Activated CD8-positive, alpha-beta T cell treated with anti-CD3 and anti-CD28 coated beads for 36 hours (primary cell): ENCODE measurements at regions of chr20 and their contacts with region 1.

Region 1: DNA sequence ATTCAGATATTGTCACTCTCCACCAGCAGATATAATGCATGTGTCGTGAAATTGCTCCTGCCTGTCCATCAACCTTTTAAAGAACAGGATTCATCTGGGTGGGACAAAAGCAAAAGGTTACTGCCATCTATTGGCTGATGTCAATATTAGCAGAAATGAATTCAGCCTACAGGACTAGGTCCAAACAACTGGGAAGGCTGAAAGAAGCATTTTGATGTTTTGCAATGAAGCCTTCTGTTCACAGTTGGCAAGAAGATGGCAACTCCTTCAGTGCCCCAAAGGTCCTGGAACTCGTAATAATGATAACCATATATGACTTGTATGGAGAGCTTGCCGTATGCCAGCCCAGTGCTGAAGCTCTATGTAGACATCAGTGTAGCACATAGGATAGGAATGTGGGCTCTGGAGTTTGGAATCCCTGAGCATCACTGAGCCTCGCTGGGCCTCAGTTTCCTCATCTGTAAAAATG is 7.5 kb downstream of the BCAS1 start:
- DNase-seq: no peak
- ATAC-seq: peak; percentile 34
- H3K4me3 Mint-ChIP-seq: no peak overlapping the region
- H3K27ac Mint-ChIP-seq: no peak overlapping the region
- H3K4me1 Mint-ChIP-seq: peaks cover 8% of the 10 kb centered on the region
- H3K27me3 Mint-ChIP-seq: no peaks in the 10 kb centered on the region
- CTCF ChIP-seq: peak; percentile 82

Region 2: DNA sequence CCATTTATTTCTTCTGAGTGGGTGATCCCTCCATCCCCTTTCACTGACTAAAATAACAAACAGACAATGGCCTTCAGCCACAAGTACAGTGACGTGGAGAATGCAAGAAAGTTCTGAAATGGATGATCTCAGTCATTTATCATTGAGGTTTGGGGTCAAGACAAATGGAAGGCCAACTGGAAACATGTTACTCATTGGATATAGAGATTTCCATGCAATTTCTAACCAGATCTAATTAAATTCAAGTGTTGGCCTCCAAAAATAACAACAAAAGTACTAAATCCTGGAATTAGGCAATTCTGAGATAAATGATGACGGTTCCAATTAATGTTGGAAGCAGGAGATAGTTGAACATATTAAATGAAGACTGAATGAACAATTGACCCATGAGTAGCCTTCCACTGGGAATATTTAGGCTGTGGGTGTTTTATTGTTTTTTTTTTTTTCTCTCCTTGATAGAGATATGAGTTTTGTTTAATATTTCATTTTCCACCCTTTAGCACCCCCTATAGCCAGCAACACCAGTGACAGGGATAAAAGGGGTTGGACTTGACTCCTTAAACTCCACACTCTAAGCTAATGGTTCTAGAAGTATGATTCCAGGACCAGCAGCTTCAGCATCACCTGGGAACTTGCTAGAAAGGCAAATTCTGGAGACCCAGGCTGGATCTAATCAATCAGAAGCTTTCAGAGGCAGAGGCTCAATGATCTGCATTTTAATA is 105.2 kb before region 1 on chr20:
- CTCF ChIA-PET with region 1: interaction called, 7 read pairs
- POLR2A ChIA-PET with region 1: no interaction called
- intact Hi-C with region 1: loop called (anchors 10 kb)
- DNase-seq: no peak
- ATAC-seq: no peak
- H3K4me3 Mint-ChIP-seq: no peak overlapping the region
- H3K27ac Mint-ChIP-seq: no peak overlapping the region
- H3K4me1 Mint-ChIP-seq: no peaks in the 10 kb centered on the region
- H3K27me3 Mint-ChIP-seq: peaks cover 5% of the 10 kb centered on the region
- CTCF ChIP-seq: no peak

Region 3: DNA sequence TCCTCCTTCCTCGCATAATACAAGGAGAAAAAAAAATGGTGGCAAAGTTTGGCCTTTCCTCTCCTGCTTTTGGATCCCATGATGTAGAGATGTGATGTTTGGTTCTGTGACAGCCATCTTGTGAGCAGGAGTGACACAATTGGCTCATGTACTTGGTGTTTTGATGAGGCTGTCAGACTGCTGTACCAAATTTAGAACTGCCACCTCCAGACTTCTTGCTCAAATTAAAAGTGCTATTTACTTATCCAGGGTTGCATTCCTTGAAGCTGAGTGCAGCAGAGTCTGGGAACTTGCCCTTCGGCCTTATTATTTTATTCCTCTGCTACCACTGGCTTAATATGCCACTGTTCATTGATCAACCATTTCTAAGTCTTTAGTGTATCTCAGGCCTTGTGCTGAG is 14.4 kb before region 1 on chr20:
- CTCF ChIA-PET with region 1: interaction called, 12 read pairs
- POLR2A ChIA-PET with region 1: no interaction called
- intact Hi-C with region 1: no loop called
- DNase-seq: no peak
- ATAC-seq: no peak
- H3K4me3 Mint-ChIP-seq: no peak overlapping the region
- H3K27ac Mint-ChIP-seq: no peak overlapping the region
- H3K4me1 Mint-ChIP-seq: peaks cover 10% of the 10 kb centered on the region
- H3K27me3 Mint-ChIP-seq: peaks cover 2% of the 10 kb centered on the region
- CTCF ChIP-seq: no peak

Region 4: DNA sequence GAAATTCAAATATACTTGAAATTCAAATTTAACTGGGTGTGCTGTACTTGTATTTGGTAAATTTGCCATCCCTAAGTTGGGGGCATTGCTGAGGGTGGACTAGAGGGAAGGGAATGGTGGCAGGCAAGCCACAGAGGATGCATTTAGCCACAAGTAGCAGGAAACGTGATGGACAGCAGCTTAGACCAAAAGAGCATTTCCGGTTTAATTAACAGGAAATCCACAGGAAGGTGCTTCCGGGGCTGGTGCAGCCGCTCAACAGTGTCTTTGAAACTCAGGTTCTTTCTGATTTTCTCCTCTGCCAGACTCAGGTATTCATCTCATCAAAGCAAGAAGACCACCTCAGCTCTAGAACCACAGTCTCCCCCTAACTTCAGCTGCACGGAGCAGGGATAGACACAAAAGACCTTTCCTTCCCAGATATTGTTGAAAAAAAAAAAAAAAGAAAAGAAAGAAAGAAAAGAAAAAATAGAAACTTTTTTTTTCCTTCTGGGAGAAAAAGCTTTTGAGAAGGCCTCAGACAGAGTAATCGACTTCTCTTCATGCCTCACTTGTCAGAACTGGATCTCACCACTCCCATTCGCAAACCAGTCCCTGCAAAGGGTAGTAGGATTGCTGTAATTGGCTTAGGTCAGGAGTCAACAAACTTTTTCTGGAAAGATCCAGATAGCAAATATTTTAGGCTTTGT is 15.6 kb after region 1 on chr20:
- CTCF ChIA-PET with region 1: interaction called, 16 read pairs
- POLR2A ChIA-PET with region 1: interaction called, 4 read pairs
- intact Hi-C with region 1: no loop called
- DNase-seq: peak; percentile 57
- ATAC-seq: peak; percentile 62
- H3K4me3 Mint-ChIP-seq: peak overlapping the region; percentile 45
- H3K27ac Mint-ChIP-seq: peak overlapping the region; percentile 84
- H3K4me1 Mint-ChIP-seq: peaks cover 17% of the 10 kb centered on the region
- H3K27me3 Mint-ChIP-seq: no peaks in the 10 kb centered on the region
- CTCF ChIP-seq: no peak

Region 5: DNA sequence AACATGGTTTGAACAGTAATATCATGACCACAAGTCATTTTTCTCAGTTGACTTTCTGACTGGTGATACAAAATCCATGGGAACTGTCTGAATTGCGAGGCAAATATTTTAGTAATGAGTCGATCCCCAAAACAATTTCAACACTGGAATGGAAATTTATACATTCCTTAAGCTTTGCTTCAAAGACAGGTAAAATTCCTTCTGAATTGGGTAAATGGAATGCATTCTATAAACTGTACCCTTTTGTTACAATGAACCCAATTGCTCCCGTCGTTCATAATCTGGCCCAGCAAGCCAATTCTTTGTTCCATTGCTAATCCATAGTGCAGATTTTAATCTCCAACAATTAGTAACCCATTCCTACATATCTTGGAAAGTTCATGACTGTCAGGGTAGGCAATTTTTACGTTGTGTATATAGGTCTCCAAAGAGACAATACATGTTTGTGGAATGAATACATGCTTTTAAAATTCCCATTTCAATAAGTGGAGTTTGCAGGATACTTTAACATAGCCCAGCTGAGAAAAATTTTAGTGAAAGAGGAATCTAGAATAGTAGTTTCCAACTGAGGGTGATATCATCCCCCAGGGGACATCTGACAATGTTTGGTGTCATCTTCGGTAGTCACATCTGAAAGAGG is 78.2 kb after region 1 on chr20:
- CTCF ChIA-PET with region 1: no interaction called
- POLR2A ChIA-PET with region 1: no interaction called
- intact Hi-C with region 1: no loop called
- DNase-seq: no peak
- ATAC-seq: no peak
- H3K4me3 Mint-ChIP-seq: no peak overlapping the region
- H3K27ac Mint-ChIP-seq: no peak overlapping the region
- H3K4me1 Mint-ChIP-seq: no peaks in the 10 kb centered on the region
- H3K27me3 Mint-ChIP-seq: peaks cover 13% of the 10 kb centered on the region
- CTCF ChIP-seq: no peak

Region 6: DNA sequence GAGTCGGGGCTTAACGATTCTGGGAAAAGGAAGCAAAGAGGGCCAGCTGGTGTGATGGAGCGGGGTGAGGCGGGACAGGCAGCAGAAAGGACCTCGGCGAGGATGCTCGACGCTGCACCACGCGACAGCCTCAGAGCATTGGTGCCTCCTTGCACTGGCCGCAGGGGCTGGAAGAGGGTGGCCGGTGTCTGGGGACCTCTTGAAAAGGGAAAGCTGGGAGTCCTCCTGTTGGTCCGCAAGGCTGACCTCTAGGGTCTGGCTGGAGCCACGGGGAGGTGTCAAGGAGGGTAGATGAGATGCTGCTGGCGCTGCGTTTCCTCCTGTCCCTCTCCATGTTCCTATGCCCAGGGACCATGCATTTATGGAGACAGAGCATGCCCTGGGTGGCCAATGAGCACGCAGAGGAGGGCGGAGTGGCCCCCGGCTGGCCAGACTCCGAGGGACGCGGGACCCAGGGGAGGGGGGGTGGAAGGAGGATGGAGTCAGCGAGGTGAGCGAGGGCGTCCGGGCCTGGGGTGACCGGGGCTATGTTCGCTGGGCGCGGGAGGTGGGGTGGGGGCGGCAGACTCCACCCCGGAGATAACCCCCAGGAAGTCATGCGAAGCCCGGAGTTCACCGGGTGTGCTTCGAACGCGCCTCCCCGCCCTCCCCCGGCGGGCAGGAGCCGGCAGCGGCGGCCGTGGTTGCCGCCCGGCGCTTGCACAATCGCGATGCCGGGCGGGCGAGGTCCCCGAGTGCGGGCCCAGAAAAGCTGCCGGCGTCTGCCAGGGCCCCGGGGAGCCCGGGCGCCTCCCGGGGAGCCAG is 111.0 kb after region 1 on chr20 and contains the start of gene CYP24A1:
- CTCF ChIA-PET with region 1: no interaction called
- POLR2A ChIA-PET with region 1: no interaction called
- intact Hi-C with region 1: no loop called
- DNase-seq: peak; percentile 4
- ATAC-seq: peak; percentile 30
- H3K4me3 Mint-ChIP-seq: peak within 1 kb of the TSS; percentile 28
- H3K27ac Mint-ChIP-seq: no peak within 1 kb of the TSS
- H3K4me1 Mint-ChIP-seq: peaks cover 11% of the 10 kb centered on the region
- H3K27me3 Mint-ChIP-seq: peaks cover 69% of the 10 kb centered on the region
- CTCF ChIP-seq: no peak
- total RNA-seq, gene CYP24A1: not detected